ENCODE measurements at regions of chr4 and their contacts with region 1.

Region 1: GRCh38 chr4:123588631-123589241 is 192.1 kb downstream of the SPRY1 start:
- DNase-seq: peak; percentile 78
- ATAC-seq: peak; percentile 61
- H3K4me3 ChIP-seq: peak overlapping the region; percentile 45; the same call in 1 of the 2 replicates
- H3K27ac ChIP-seq: peak overlapping the region; percentile 98
- H3K4me1 ChIP-seq: peaks cover 26% of the 10 kb centered on the region
- H3K27me3 ChIP-seq: no peaks in the 10 kb centered on the region
- CTCF ChIP-seq: no peak

Region 2: DNA sequence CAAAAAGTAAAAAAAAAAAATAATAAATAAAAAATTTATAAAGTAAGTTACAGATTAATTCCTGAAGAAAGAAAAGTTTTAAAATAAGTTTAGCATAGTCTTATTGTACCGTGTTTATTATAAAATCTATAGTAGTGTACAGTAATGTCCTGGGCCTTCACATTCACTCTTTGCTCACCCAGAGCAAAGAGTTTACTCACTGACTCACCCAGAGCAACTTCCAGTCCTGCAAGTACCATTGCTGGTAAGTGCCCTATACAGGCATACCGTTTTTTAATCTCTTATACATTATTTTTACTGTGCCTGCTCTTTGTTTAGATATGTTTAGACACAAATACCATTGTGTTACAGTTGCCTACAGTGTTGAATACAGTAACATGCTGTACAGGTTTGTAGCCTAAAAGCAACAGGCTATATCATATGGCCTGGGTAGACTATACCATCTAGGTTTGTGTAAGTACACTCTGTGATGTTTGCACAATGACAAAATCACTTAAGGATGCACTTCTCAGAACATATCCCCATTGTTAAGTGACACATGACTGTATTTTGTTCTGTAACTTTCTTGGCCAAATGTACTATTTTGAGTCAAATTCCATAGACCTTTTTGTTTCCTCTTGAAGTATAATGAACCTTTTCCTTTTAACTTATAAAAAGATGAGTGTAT is 467.4 kb before region 1 on chr4:
- CTCF ChIA-PET with region 1: no interaction called
- POLR2A ChIA-PET with region 1: no interaction called
- intact Hi-C with region 1: loop called (anchors 5 kb)
- DNase-seq: peak; percentile 77
- ATAC-seq: peak; percentile 90
- H3K4me3 ChIP-seq: peak overlapping the region; percentile 31; the same call in 1 of the 2 replicates
- H3K27ac ChIP-seq: peak overlapping the region; percentile 88
- H3K4me1 ChIP-seq: peaks cover 35% of the 10 kb centered on the region
- H3K27me3 ChIP-seq: no peaks in the 10 kb centered on the region
- CTCF ChIP-seq: no peak

Region 3: GRCh38 chr4:123418351-123418931 is 170.3 kb before region 1 on chr4:
- CTCF ChIA-PET with region 1: no interaction called
- POLR2A ChIA-PET with region 1: no interaction called
- intact Hi-C with region 1: loop called (anchors 1 kb)
- DNase-seq: peak; percentile 88
- ATAC-seq: peak; percentile 83
- H3K4me3 ChIP-seq: peak overlapping the region; percentile 33; the same call in 1 of the 2 replicates
- H3K27ac ChIP-seq: peak overlapping the region; percentile 95
- H3K4me1 ChIP-seq: peaks cover 68% of the 10 kb centered on the region
- H3K27me3 ChIP-seq: no peaks in the 10 kb centered on the region
- CTCF ChIP-seq: no peak

Region 4: DNA sequence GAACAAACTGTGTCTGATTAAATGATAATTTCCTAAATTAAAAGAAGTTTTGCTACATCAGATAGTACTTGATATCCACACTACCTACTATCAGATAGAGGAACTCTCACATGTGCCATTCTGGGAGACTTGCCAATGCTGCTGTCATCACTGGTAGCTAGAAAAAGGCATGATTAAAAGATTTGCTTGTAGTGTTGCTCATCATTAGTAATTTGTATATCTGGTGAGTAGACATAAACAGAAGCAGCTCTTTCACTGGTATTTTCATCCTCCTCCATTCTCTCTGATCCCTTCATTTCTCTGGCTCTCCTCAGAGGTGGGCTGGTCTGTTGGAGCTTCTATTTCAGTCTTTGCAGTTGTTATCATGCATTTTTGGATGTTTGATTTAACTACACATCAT is 136.1 kb before region 1 on chr4:
- CTCF ChIA-PET with region 1: no interaction called
- POLR2A ChIA-PET with region 1: no interaction called
- intact Hi-C with region 1: loop called (anchors 1 kb)
- DNase-seq: peak; percentile 90
- ATAC-seq: peak; percentile 30
- H3K4me3 ChIP-seq: no peak overlapping the region
- H3K27ac ChIP-seq: peak overlapping the region; percentile 46
- H3K4me1 ChIP-seq: peaks cover 36% of the 10 kb centered on the region
- H3K27me3 ChIP-seq: no peaks in the 10 kb centered on the region
- CTCF ChIP-seq: no peak

Region 5: DNA sequence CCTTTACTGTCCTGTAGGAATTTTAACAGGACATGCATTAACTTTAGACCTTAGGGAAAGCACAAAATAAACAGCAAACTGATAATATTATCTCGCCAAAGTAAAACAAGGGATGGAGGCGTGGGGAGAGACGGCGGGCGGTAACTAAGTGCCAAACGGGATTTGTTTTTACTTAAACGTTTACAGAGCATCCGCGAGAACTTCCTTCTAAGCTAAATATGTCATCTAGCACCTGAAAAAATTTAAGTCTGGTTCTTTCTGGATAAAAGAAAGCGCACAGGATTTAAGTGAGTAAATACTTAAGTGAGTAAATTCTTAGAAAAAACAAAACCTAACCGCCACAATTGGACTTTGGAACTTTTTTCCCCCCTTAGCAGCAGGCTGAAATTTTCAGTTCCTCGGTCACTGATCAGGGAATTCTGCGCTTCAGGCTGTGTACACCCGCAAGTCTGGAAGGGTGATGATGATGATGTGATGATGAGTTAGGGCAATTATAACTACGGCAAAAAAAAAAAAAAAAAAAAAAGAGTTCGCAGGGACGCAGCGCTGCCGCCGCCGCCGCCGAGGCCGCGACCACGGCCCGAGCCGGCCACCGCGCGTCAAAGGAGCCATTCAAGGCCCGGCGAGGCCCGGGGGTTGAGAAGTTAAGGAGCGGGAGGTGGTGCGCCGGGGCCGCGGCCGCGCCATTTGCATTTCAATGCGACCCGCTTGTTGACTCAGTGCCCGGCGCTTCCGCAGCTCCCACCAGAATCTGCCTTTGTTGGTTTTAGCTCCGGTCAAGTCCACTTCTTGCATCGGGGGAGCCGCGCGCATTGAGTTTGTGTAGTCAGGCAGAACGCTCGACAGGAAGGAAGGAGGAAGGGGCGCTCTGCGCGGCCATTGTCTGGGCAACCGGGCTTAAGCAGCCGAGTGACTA is 83.4 kb before region 1 on chr4:
- CTCF ChIA-PET with region 1: no interaction called
- POLR2A ChIA-PET with region 1: no interaction called
- intact Hi-C with region 1: no loop called
- DNase-seq: peak; percentile 41
- ATAC-seq: peak; percentile 66
- H3K4me3 ChIP-seq: peak overlapping the region; percentile 71
- H3K27ac ChIP-seq: peak overlapping the region; percentile 49
- H3K4me1 ChIP-seq: peaks cover 10% of the 10 kb centered on the region
- H3K27me3 ChIP-seq: no peaks in the 10 kb centered on the region
- CTCF ChIP-seq: no peak

Region 6: DNA sequence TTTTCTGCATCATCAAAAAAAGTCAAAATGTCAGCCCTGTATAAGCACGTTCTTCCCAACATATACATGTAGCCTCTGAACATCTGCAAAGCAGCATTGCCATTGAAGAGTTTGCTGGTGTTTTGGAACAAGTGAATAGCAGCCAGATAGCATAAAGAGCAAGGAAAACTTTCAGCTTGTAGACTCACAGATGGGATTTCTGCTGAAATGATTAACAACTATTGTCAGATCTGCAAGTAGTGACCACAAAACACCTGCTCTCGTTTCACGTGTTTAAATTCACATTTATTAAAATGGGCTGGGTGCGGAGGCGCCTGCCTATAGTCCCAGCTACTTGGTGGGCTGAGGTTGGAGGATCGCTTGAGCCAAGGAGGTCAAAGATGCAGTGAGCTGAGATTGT is 68.4 kb before region 1 on chr4:
- CTCF ChIA-PET with region 1: interaction called, 13 read pairs
- POLR2A ChIA-PET with region 1: no interaction called
- intact Hi-C with region 1: no loop called
- DNase-seq: no peak
- ATAC-seq: no peak
- H3K4me3 ChIP-seq: no peak overlapping the region
- H3K27ac ChIP-seq: no peak overlapping the region
- H3K4me1 ChIP-seq: no peaks in the 10 kb centered on the region
- H3K27me3 ChIP-seq: no peaks in the 10 kb centered on the region
- CTCF ChIP-seq: no peak

Region 7: GRCh38 chr4:123599920-123600810 is 11.4 kb after region 1 on chr4:
- CTCF ChIA-PET with region 1: no interaction called
- POLR2A ChIA-PET with region 1: no interaction called
- intact Hi-C with region 1: no loop called
- DNase-seq: no peak
- ATAC-seq: no peak
- H3K4me3 ChIP-seq: no peak overlapping the region
- H3K27ac ChIP-seq: no peak overlapping the region
- H3K4me1 ChIP-seq: peaks cover 10% of the 10 kb centered on the region
- H3K27me3 ChIP-seq: no peaks in the 10 kb centered on the region
- CTCF ChIP-seq: no peak

Region 8: GRCh38 chr4:123616951-123617461 is 28.3 kb after region 1 on chr4:
- CTCF ChIA-PET with region 1: no interaction called
- POLR2A ChIA-PET with region 1: no interaction called
- intact Hi-C with region 1: loop called (anchors 2 kb)
- DNase-seq: peak; percentile 15
- ATAC-seq: peak; percentile 38
- H3K4me3 ChIP-seq: no peak overlapping the region
- H3K27ac ChIP-seq: no peak overlapping the region
- H3K4me1 ChIP-seq: no peaks in the 10 kb centered on the region
- H3K27me3 ChIP-seq: no peaks in the 10 kb centered on the region
- CTCF ChIP-seq: no peak

Measured in PC-3 (cell line).